CD4-positive, alpha-beta memory T cell (primary cell): ENCODE measurements at regions of chr3 and their contacts with region 1.

Region 1: GRCh38 chr3:176928582-176928931 is 268.7 kb downstream of the TBL1XR1 start:
- DNase-seq: no peak
- H3K4me3 ChIP-seq: no peak overlapping the region
- H3K4me3 Mint-ChIP-seq: no peak overlapping the region
- H3K27ac ChIP-seq: no peak overlapping the region
- H3K27ac Mint-ChIP-seq: no peak overlapping the region
- H3K4me1 ChIP-seq: no peaks in the 10 kb centered on the region
- H3K4me1 Mint-ChIP-seq: peaks cover 0 to 5% (median under 1%) of the 10 kb centered on the region in 4 donors
- H3K27me3 ChIP-seq: no peaks in the 10 kb centered on the region
- H3K27me3 Mint-ChIP-seq: peaks cover 9 to 15% of the 10 kb centered on the region in 2 donors

Region 2: DNA sequence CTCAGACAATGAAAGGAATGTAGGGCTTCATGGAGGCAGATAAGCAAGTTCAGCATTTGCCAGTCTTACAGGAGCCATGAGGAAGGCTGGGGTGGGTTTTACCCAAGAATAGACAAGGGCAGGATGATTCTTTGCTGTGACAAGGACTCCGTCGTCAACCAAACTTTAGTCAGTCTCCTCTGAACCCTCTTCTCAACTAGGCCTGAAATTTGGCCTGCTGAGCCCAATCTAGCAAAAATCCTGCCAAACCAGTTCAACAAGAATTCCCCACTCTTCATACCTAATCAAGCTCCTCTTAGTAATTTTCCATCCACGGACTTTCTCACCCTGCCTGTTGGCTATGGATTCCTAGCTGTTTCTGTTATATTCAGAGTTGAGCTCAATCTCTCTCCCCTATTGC is 11.8 kb before region 1 on chr3:
- CTCF ChIA-PET with region 1: no interaction called
- POLR2A ChIA-PET with region 1: no interaction called
- intact Hi-C with region 1: no loop called
- DNase-seq: no peak
- H3K4me3 ChIP-seq: no peak overlapping the region
- H3K4me3 Mint-ChIP-seq: no peak overlapping the region
- H3K27ac ChIP-seq: no peak overlapping the region
- H3K27ac Mint-ChIP-seq: no peak overlapping the region
- H3K4me1 ChIP-seq: no peaks in the 10 kb centered on the region
- H3K4me1 Mint-ChIP-seq: no peaks in the 10 kb centered on the region
- H3K27me3 ChIP-seq: no peaks in the 10 kb centered on the region
- H3K27me3 Mint-ChIP-seq: peaks cover 6 to 7% of the 10 kb centered on the region in 2 donors

Region 3: GRCh38 chr3:176939022-176939817 is 10.7 kb after region 1 on chr3:
- CTCF ChIA-PET with region 1: interaction called, 10 read pairs
- POLR2A ChIA-PET with region 1: no interaction called
- intact Hi-C with region 1: no loop called
- DNase-seq: peak; percentile 34 to 53 (median 44)
- H3K4me3 ChIP-seq: no peak overlapping the region
- H3K4me3 Mint-ChIP-seq: no peak overlapping the region
- H3K27ac ChIP-seq: no peak overlapping the region
- H3K27ac Mint-ChIP-seq: no peak overlapping the region
- H3K4me1 ChIP-seq: no peaks in the 10 kb centered on the region
- H3K4me1 Mint-ChIP-seq: no peaks in the 10 kb centered on the region
- H3K27me3 ChIP-seq: no peaks in the 10 kb centered on the region
- H3K27me3 Mint-ChIP-seq: peaks cover 9 to 10% of the 10 kb centered on the region in 2 donors